GM12878 (cell line): ENCODE measurements at regions of chr5 and their contacts with region 1.

Region 1: DNA sequence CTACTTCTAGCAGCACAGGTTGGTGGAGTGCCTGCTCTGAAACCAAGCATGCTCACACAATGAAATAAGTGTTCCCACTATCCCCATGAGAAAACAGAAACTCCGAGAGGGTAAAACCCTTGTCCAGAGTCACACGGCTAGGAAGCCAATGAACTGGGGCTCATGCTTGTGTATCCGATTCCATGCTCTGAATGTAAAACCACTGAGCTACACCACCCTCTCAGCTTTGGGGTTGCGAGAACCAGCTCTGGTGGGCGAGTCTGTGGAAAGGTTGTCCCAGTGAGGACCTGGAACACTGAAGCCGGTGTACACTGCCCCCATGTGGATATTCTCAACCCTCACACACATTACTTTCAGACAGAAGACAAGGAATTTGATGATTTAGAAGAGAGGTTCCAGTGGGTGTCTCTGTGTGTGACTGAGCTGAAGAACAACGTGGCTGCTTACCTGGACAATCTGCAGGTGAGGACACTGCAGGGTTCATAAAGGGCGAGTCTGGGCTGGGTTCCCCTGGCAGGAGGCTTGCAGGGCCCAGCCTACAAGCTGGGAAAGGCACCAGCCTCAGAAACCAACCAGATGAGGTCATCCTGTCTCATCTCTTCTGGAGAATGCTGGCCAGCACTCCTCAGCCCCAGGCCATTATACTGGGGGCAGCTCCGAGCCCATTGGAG is 37.4 kb downstream of the ARHGEF37 start:
- DNase-seq: peak; percentile 62
- ATAC-seq: peak; percentile 67
- H3K4me3 ChIP-seq: peak overlapping the region; percentile 43; the same call in 1 of the 2 replicates
- H3K27ac ChIP-seq: peak overlapping the region; percentile 59
- H3K4me1 ChIP-seq: peaks cover 31% of the 10 kb centered on the region
- H3K27me3 ChIP-seq: no peaks in the 10 kb centered on the region
- CTCF ChIP-seq: peak; percentile 64 to 81 (median 73)
- EP300 ChIP-seq: no peak
- POLR2A ChIP-seq: no peak
- RAD21 ChIP-seq: peak; percentile 84

Region 2: DNA sequence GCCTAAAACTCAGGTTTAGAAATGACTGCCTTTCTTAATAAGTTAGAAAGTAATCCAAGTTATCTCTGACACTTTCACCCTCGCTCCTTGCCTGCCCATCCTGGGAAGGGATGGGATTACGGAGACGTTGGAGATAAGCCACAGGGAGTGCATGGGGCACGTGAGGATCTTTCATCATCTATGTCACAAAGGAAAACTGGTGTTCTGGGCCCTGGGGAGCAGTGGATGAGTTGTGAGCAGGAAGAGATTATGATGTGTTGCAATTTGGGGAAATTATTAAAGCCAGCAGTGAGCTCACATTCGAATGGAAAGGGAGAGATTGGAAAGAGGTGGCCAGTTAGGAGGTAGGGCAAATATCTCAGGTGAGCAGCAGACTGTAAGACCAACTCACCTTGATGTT is 334.2 kb before region 1 on chr5:
- CTCF ChIA-PET with region 1: no interaction called
- POLR2A ChIA-PET with region 1: no interaction called
- RAD21 ChIA-PET with region 1: no interaction called
- SMC1A ChIA-PET with region 1: no interaction called
- in situ Hi-C with region 1: no loop called
- intact Hi-C with region 1: no loop called
- DNase-seq: no peak
- ATAC-seq: no peak
- H3K4me3 ChIP-seq: no peak overlapping the region
- H3K27ac ChIP-seq: no peak overlapping the region
- H3K4me1 ChIP-seq: no peaks in the 10 kb centered on the region
- H3K27me3 ChIP-seq: peaks cover 0 to 1% of the 10 kb centered on the region in 2 experiments; a peak in 2 of 4 replicates
- CTCF ChIP-seq: no peak
- EP300 ChIP-seq: no peak
- POLR2A ChIP-seq: no peak
- RAD21 ChIP-seq: no peak

Region 3: GRCh38 chr5:149434162-149435014 is 184.3 kb before region 1 on chr5:
- CTCF ChIA-PET with region 1: interaction called, 108 read pairs
- POLR2A ChIA-PET with region 1: no interaction called
- RAD21 ChIA-PET with region 1: interaction called, 3 read pairs
- SMC1A ChIA-PET with region 1: interaction called, 9 read pairs
- in situ Hi-C with region 1: no loop called
- intact Hi-C with region 1: no loop called
- DNase-seq: no peak
- ATAC-seq: peak; percentile 75
- H3K4me3 ChIP-seq: no peak overlapping the region
- H3K27ac ChIP-seq: no peak overlapping the region
- H3K4me1 ChIP-seq: no peaks in the 10 kb centered on the region
- H3K27me3 ChIP-seq: peaks cover 0 to 5% of the 10 kb centered on the region in 2 experiments; a peak in 3 of 4 replicates
- CTCF ChIP-seq: peak; percentile 71 to 84 (median 75)
- EP300 ChIP-seq: no peak
- POLR2A ChIP-seq: no peak
- RAD21 ChIP-seq: peak; percentile 52

Region 4: DNA sequence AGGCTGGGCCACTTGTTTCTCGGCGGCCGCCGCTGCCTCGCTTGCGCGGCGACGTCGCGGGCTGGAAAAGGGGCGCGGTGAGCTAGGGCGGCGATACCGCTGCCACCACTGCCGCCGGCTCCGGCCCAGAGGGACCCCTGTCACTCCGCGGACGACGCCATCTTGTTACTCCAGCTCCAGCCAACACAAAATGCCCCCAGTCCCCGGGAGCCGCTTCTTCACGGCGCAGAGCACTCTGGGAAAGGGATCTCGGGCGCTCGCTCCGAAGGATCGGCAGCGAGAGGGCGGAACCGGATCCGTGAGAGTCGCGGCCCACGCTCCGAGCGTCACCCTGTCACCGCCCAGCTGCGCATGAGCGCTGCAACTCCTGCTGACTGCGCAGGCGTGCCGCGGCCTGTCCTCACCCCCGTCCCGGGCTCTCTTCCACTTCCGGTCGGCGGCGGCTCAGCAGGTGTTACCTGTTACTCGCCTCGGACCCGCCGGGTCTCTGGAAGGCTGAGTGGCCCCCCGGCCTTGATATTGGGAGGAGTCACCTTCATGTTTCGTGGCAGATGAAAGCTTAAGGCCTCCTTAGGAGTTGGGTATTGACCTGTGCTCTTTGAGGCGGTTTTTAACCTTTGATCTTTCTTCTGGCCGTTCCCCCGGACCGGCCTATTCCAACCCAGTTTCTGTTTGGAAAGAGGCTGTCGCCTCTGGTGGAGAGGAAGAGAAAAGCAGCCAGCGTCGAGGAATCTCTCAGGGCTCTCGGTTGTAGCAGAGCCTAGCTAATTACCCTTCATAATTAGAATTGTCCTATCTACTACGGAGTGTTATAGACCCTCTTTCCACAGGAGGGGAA is 67.3 kb before region 1 on chr5 and contains the start of gene CSNK1A1:
- CTCF ChIA-PET with region 1: interaction called, 39 read pairs
- POLR2A ChIA-PET with region 1: interaction called, 22 read pairs
- RAD21 ChIA-PET with region 1: interaction called, 20 read pairs
- SMC1A ChIA-PET with region 1: interaction called, 11 read pairs
- in situ Hi-C with region 1: no loop called
- intact Hi-C with region 1: loop called (anchors 1 kb)
- DNase-seq: peak; percentile 98
- ATAC-seq: peak; percentile 91
- H3K4me3 ChIP-seq: peak within 1 kb of the TSS; percentile 82
- H3K27ac ChIP-seq: peak within 1 kb of the TSS; percentile 100
- H3K4me1 ChIP-seq: no peaks in the 10 kb centered on the region; the same call in 1 of the 2 replicates
- H3K27me3 ChIP-seq: no peaks in the 10 kb centered on the region
- CTCF ChIP-seq: peak; percentile 58 to 77 (median 69)
- EP300 ChIP-seq: 0 out of 4 replicates have a peak, but pooled peaks of 1 of the 2 experiments have one; percentile 23
- POLR2A ChIP-seq: peak; percentile 94
- RAD21 ChIP-seq: peak; percentile 51
- polyA plus RNA-seq, gene CSNK1A1: 53.3 to 62.0 TPM

Region 5: DNA sequence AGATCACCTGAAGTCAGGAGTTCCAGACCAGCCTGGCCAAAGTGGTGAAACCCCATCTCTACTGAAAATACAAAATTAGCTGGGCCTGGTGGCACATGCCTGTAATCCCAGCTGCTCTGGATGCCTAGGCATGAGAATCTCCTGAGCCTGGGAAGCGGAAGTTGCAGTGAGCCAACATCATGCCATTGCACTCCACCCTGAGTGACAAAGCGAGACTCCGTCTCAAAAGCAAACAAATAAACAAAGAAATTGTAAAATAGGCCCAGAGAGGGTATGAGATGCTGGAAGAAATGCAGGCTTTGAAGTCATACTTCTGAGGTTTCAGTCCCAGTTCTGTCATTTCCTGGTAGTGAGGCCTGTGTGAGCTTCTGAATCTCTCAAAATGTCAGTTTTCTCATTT is 42.7 kb before region 1 on chr5:
- CTCF ChIA-PET with region 1: interaction called, 31 read pairs
- POLR2A ChIA-PET with region 1: no interaction called
- RAD21 ChIA-PET with region 1: interaction called, 3 read pairs
- SMC1A ChIA-PET with region 1: interaction called, 19 read pairs
- in situ Hi-C with region 1: no loop called
- intact Hi-C with region 1: no loop called
- DNase-seq: no peak
- ATAC-seq: peak; percentile 86
- H3K4me3 ChIP-seq: no peak overlapping the region
- H3K27ac ChIP-seq: no peak overlapping the region
- H3K4me1 ChIP-seq: peaks cover 10% of the 10 kb centered on the region
- H3K27me3 ChIP-seq: peaks cover 0 to 2% of the 10 kb centered on the region in 2 experiments; a peak in 2 of 4 replicates
- CTCF ChIP-seq: no peak
- EP300 ChIP-seq: no peak
- POLR2A ChIP-seq: no peak
- RAD21 ChIP-seq: no peak

Region 6: GRCh38 chr5:149605998-149606724 is 12.6 kb before region 1 on chr5:
- CTCF ChIA-PET with region 1: interaction called, 44 read pairs
- POLR2A ChIA-PET with region 1: interaction called, 5 read pairs
- RAD21 ChIA-PET with region 1: interaction called, 35 read pairs
- SMC1A ChIA-PET with region 1: interaction called, 46 read pairs
- in situ Hi-C with region 1: no loop called
- intact Hi-C with region 1: loop called (anchors 1 kb)
- DNase-seq: peak; percentile 81
- ATAC-seq: peak; percentile 95
- H3K4me3 ChIP-seq: peak overlapping the region; percentile 25; the same call in 1 of the 2 replicates
- H3K27ac ChIP-seq: peak overlapping the region; percentile 28
- H3K4me1 ChIP-seq: peaks cover 18% of the 10 kb centered on the region
- H3K27me3 ChIP-seq: no peaks in the 10 kb centered on the region
- CTCF ChIP-seq: no peak
- EP300 ChIP-seq: peak; percentile 64 to 76; a peak in 3 of 4 replicates
- POLR2A ChIP-seq: no peak
- RAD21 ChIP-seq: no peak

Region 7: DNA sequence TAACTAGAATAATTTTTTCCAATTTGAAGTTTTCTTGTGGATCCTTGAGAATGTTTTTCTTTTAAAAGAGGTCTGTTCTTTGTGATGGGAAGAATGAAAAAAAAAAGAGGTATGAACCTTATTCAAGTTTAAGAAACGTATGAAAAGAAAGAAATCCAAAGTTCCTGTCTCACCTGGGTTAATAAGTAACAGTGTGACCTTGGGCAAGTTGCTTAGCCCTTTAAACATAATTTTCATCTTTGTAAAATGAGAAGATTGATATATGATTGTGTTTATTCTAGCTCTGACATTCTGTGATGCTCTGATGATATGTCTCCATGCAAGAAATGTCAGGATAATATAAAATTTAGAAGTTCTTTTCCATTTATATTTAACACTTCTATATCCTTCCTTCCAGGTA is 361.2 kb after region 1 on chr5:
- CTCF ChIA-PET with region 1: no interaction called
- POLR2A ChIA-PET with region 1: no interaction called
- RAD21 ChIA-PET with region 1: no interaction called
- SMC1A ChIA-PET with region 1: no interaction called
- in situ Hi-C with region 1: no loop called
- intact Hi-C with region 1: no loop called
- DNase-seq: no peak
- ATAC-seq: no peak
- H3K4me3 ChIP-seq: no peak overlapping the region
- H3K27ac ChIP-seq: no peak overlapping the region
- H3K4me1 ChIP-seq: no peaks in the 10 kb centered on the region
- H3K27me3 ChIP-seq: no peaks in the 10 kb centered on the region
- CTCF ChIP-seq: no peak
- EP300 ChIP-seq: no peak
- POLR2A ChIP-seq: no peak
- RAD21 ChIP-seq: no peak